ENCODE measurements at regions of chrX and their contacts with region 1.

Region 1: GRCh38 chrX:45758319-45758718 is 557.6 kb upstream of the DIPK2B start:
- DNase-seq: peak; percentile 70
- H3K4me3 Mint-ChIP-seq: peak overlapping the region; percentile 62
- H3K27ac Mint-ChIP-seq: peak overlapping the region; percentile 86
- H3K4me1 Mint-ChIP-seq: peaks cover 71% of the 10 kb centered on the region
- H3K27me3 Mint-ChIP-seq: no peaks in the 10 kb centered on the region

Region 2: GRCh38 chrX:45710081-45710801 is 48.1 kb before region 1 on chrX:
- CTCF ChIA-PET with region 1: no interaction called
- intact Hi-C with region 1: loop called (anchors 1 kb)
- DNase-seq: peak; percentile 71
- H3K4me3 Mint-ChIP-seq: no peak overlapping the region
- H3K27ac Mint-ChIP-seq: peak overlapping the region; percentile 69
- H3K4me1 Mint-ChIP-seq: peaks cover 42% of the 10 kb centered on the region
- H3K27me3 Mint-ChIP-seq: no peaks in the 10 kb centered on the region

Region 3: DNA sequence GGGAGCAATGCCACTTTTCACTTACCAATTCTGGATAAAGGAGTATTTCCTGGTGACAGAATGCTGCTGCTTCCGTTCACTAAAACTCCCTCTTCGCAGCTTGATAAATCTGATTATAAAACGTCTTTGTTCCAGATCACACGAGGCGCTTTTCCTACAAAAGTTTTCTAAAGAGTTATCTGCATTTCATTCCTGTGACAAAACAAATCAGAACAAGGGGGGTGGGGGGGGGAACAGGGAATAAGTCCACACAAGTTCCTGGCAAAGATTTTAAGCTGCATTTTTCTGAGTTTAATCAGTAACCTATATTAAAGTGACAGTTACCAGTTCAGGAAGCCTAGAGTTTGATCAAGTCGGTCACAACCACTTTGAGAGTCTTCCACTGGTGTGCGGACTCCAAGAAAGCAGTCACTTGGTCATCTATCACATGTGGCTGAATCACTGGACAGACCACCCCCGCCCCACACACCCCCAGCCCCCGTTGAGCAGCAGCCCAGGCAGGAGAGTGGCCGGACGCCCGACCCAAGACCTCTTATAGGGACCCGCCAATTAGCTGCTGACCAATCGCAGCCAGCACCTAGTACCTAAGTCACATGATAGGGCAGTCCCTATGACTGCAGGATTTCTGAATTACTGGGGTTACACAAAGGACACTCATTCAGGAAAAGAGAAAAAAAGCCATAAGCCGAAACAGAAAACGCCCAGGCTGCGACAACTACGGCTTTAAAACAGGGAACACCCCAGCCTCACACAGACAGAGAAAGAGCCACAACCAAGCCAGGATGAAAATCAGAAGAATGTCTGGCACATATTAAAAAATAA is 11.7 kb after region 1 on chrX:
- CTCF ChIA-PET with region 1: interaction called, 4 read pairs
- intact Hi-C with region 1: loop called (anchors 1 kb)
- DNase-seq: peak; percentile 58
- H3K4me3 Mint-ChIP-seq: peak overlapping the region; percentile 79
- H3K27ac Mint-ChIP-seq: peak overlapping the region; percentile 91
- H3K4me1 Mint-ChIP-seq: peaks cover 46% of the 10 kb centered on the region
- H3K27me3 Mint-ChIP-seq: no peaks in the 10 kb centered on the region

Measured in activated naive CD4-positive, alpha-beta T cell treated with anti-CD3 and anti-CD28 coated beads for 36 hours (primary cell).